SK-N-SH (cell line): ENCODE measurements at regions of chr3 and their contacts with region 1.

Region 1: DNA sequence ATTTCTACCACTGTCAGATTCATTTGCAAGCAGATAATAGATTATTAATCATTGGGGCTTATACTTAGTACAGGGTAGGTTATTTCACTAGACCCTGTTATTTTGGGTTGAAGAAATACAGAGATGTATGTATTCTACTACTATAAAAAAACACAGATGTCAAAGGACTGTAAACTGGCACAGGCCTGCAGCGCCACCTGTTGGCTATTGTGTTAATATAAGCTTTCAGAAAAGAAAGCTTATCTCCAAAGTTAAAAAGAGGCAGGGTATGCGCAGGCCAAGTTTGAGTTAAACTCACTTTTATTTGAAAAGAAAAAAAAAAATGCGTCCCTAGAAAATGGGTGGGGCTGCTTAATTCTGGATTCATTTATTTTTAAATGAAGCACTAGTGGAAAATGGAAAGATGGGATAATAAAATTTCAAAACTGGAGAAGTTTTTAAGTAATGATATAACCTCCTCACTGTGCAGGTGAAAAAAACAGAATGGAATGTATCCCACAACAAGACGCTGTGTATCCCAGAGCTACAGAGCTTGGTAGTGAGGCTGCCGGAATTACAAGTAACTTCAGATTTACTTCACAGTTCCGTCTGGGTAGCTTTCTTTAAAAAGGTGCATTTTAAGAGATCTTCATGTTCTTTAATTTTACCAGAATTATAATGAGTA is 407.2 kb upstream of the TGFBR2 start:
- DNase-seq: peak; percentile 23
- H3K4me3 ChIP-seq: no peak overlapping the region; a peak in 1 of 4 replicates
- H3K27ac ChIP-seq: no peak overlapping the region
- H3K4me1 ChIP-seq: peaks cover 2 to 10% of the 10 kb centered on the region in 2 experiments; a peak in 3 of 4 replicates
- H3K27me3 ChIP-seq: no peaks in the 10 kb centered on the region
- CTCF ChIP-seq: peak; percentile 93
- EP300 ChIP-seq: no peak; a peak in 1 of 4 replicates
- RAD21 ChIP-seq: peak; percentile 93

Region 2: GRCh38 chr3:30012941-30013543 is 186.2 kb before region 1 on chr3:
- CTCF ChIA-PET with region 1: interaction called, 13 read pairs
- POLR2A ChIA-PET with region 1: no interaction called
- DNase-seq: peak; percentile 41
- H3K4me3 ChIP-seq: no peak overlapping the region; a peak in 1 of 4 replicates
- H3K27ac ChIP-seq: no peak overlapping the region
- H3K4me1 ChIP-seq: peaks cover 0 to 2% of the 10 kb centered on the region in 2 experiments; a peak in 2 of 4 replicates
- H3K27me3 ChIP-seq: no peaks in the 10 kb centered on the region
- CTCF ChIP-seq: peak; percentile 80
- EP300 ChIP-seq: no peak
- RAD21 ChIP-seq: peak; percentile 73

Region 3: DNA sequence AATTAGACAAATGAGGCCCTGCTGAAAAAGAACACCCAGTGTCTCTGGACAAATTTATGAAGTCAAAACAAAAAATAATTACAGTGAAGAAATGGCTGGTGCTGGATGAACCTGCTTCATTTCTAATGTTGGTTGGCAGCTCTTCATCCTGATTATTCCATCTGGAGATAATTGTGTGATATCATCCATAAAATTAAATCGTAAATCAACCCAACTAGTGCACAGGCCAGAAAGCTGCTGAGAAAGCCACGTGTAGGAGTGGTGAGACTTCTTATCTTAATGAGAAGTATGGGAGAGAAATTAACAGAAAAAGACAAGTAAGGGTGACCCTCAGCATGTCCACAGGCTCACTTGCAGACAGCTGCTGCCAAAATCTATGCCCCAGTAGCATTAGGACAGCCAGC is 58.0 kb before region 1 on chr3:
- CTCF ChIA-PET with region 1: interaction called, 21 read pairs
- POLR2A ChIA-PET with region 1: no interaction called
- DNase-seq: peak; percentile 26
- H3K4me3 ChIP-seq: no peak overlapping the region
- H3K27ac ChIP-seq: peak overlapping the region in 1 of 2 experiments; percentile 94; a peak in 2 of 4 replicates
- H3K4me1 ChIP-seq: peaks cover 9 to 17% of the 10 kb centered on the region in 2 experiments; a peak in 3 of 4 replicates
- H3K27me3 ChIP-seq: no peaks in the 10 kb centered on the region
- CTCF ChIP-seq: no peak
- EP300 ChIP-seq: peak in 1 of 2 experiments; percentile 98; a peak in 2 of 4 replicates
- RAD21 ChIP-seq: no peak; the same call in 1 of the 2 replicates

Region 4: DNA sequence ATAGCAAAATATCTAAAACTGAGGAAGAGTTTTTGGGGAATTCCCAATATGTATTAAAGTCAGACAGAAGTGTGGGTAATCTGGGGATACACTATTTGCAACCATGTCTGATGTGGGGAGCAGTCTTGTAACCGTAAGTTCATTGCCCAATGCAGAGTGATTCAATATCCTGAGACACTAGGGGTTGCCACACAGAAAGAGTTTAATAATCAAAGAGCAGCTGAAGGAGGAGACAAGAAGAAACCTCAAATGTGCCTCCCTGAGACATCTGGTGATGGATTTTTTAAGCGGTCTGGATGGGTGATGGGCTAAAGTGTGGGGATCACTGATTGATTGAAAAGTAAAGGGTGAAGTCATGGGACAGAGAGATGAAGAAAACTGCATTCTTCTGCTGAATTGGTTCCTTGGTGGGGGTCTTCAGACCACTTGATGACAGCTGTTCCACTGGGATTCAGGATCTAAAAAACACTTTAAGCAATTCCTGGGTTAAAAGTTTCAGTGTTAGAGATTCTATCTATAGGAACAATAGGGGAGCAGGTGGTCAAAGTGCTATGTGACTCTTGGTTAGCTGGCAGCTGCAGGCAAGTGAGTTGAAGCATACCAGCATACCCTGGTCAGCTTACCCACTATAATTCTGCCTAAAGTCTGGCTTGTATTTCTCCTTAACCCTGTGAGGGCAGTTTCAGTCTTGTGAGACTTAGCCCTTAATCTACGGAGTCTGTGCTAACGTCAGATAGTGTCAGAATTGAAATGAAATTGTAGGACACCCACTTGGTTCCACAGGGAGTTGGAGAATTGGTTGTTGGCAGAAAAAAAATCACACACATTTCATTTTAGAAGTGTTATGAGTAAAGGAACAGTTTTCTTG is 18.7 kb before region 1 on chr3:
- CTCF ChIA-PET with region 1: interaction called, 11 read pairs
- POLR2A ChIA-PET with region 1: no interaction called
- DNase-seq: no peak
- H3K4me3 ChIP-seq: no peak overlapping the region
- H3K27ac ChIP-seq: no peak overlapping the region
- H3K4me1 ChIP-seq: peaks cover 0 to 6% of the 10 kb centered on the region in 2 experiments; a peak in 1 of 4 replicates
- H3K27me3 ChIP-seq: no peaks in the 10 kb centered on the region
- CTCF ChIP-seq: no peak
- EP300 ChIP-seq: no peak
- RAD21 ChIP-seq: no peak

Region 5: GRCh38 chr3:30231277-30232141 is 32.3 kb after region 1 on chr3:
- CTCF ChIA-PET with region 1: interaction called, 25 read pairs
- POLR2A ChIA-PET with region 1: no interaction called
- DNase-seq: peak; percentile 9
- H3K4me3 ChIP-seq: no peak overlapping the region
- H3K27ac ChIP-seq: peak overlapping the region; percentile 7 to 50; a peak in 3 of 4 replicates
- H3K4me1 ChIP-seq: peaks cover 0 to 30% of the 10 kb centered on the region in 2 experiments
- H3K27me3 ChIP-seq: no peaks in the 10 kb centered on the region
- CTCF ChIP-seq: no peak
- EP300 ChIP-seq: peak in 1 of 2 experiments; percentile 69; a peak in 1 of 4 replicates
- RAD21 ChIP-seq: no peak